Activated CD8-positive, alpha-beta T cell treated with anti-CD3 and anti-CD28 coated beads, Interleukin-2, amount 10 ng/mL, durations not matched to agents 7 days and 5 days (primary cell): ENCODE measurements at regions of chr17 and their contacts with region 1.

Region 1: GRCh38 chr17:2137342-2138098 is 82.6 kb downstream of the HIC1 start:
- DNase-seq: no peak
- ATAC-seq: no peak
- H3K4me3 Mint-ChIP-seq: no peak overlapping the region
- H3K27ac Mint-ChIP-seq: peak overlapping the region; percentile 56
- H3K4me1 Mint-ChIP-seq: peaks cover 23% of the 10 kb centered on the region
- H3K27me3 Mint-ChIP-seq: no peaks in the 10 kb centered on the region

Region 2: GRCh38 chr17:2122641-2123302 is 14.7 kb before region 1 on chr17:
- CTCF ChIA-PET with region 1: interaction called, 10 read pairs
- POLR2A ChIA-PET with region 1: no interaction called
- DNase-seq: no peak
- ATAC-seq: peak; percentile 57
- H3K4me3 Mint-ChIP-seq: no peak overlapping the region
- H3K27ac Mint-ChIP-seq: peak overlapping the region; percentile 77
- H3K4me1 Mint-ChIP-seq: peaks cover 27% of the 10 kb centered on the region
- H3K27me3 Mint-ChIP-seq: no peaks in the 10 kb centered on the region